ENCODE measurements at regions of chr2 and their contacts with region 1.

Region 1: DNA sequence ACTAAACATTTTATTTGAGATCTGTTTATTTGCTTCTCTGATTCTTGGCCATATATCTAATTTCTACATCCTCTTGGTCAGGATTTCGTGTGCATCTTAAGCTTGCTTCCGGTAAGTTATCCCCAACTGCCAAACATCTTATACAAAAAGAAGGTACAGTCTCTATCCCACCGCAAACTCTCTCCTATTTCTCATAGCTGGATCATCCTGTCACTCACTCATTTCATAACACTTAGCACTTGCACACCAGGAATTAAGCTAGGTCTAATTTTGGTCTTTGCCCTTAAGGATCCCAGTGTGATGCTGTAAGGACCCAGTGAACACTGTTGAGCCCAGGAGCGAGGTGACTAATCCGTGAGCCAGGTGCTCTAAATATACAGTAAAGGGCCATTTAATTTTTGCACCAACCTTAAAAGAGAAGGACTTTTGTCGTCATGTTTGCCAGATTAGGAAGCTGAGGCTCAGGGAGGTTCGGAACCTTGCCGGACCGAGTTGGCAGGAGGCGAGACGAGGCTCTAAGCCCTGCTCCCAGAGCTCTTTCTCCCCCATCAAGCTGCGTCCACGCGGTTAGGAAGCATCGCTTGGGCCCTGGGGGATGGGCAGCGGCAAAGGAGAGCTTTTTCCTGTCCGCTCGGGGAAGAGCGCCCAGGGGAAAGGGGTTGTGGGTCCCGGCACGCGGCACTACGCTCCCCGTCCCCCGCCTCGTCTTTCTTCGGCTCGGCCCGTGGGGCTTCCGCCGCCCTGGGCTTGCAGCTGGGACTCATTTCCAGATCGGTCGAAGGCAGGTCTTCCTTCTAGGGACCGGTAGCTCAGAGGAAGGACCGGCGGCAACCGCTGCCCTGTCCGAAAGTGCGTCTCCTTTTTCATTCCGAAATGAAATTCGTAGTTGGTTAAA is 4.1 kb upstream of the ITPRIPL1 start:
- DNase-seq: peak; percentile 26
- H3K4me3 Mint-ChIP-seq: peak overlapping the region; percentile 88
- H3K27ac Mint-ChIP-seq: peak overlapping the region; percentile 85
- H3K4me1 Mint-ChIP-seq: peaks cover 63% of the 10 kb centered on the region
- H3K27me3 Mint-ChIP-seq: no peaks in the 10 kb centered on the region

Region 2: DNA sequence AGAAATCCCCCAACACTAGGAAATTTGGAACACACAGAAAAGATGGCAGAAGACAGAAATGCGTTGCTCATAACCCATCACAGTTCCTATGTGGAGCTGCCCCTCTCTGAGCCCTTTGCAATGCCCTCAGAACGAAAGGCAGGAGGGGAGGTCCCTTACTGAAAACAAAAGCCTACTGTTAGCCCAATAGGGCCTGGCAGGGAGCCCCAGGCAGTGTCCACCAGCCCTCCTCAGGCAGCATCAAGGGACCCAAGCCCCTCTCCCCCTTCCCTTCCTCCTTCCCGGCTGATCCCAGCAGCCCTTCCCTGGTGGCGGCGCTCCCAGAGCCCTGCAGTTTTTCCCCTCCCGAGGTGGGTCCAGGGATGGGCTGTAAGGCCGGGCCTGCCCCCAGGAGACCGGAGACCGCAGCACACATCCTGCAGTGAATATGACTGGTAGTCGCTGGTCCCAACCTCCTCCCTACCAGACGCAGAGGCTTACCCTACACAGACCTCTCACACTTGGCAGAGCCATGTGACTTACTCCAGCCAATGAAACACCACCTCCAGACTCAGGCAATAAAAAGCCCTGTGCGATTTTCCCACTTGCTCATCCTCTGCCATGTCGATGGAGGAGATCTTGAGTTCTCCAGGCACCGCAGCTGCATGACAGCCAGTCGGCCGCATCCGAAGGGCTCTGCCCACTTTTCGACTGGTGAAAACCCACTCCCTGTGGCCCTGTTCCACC is 156.4 kb before region 1 on chr2:
- intact Hi-C with region 1: loop called (anchors 5 kb)
- DNase-seq: peak; percentile 49
- H3K4me3 Mint-ChIP-seq: peak overlapping the region; percentile 81
- H3K27ac Mint-ChIP-seq: peak overlapping the region; percentile 99
- H3K4me1 Mint-ChIP-seq: peaks cover 60% of the 10 kb centered on the region
- H3K27me3 Mint-ChIP-seq: no peaks in the 10 kb centered on the region

Region 3: GRCh38 chr2:96208143-96209010 is 112.6 kb before region 1 on chr2 and contains the start of gene STARD7:
- intact Hi-C with region 1: loop called (anchors 5 kb)
- DNase-seq: peak; percentile 98
- H3K4me3 Mint-ChIP-seq: peak within 1 kb of the TSS; percentile 96
- H3K27ac Mint-ChIP-seq: peak within 1 kb of the TSS; percentile 94
- H3K4me1 Mint-ChIP-seq: peaks cover 57% of the 10 kb centered on the region
- H3K27me3 Mint-ChIP-seq: no peaks in the 10 kb centered on the region
- total RNA-seq, gene STARD7: 216 and 229 TPM in 2 replicates

Region 4: DNA sequence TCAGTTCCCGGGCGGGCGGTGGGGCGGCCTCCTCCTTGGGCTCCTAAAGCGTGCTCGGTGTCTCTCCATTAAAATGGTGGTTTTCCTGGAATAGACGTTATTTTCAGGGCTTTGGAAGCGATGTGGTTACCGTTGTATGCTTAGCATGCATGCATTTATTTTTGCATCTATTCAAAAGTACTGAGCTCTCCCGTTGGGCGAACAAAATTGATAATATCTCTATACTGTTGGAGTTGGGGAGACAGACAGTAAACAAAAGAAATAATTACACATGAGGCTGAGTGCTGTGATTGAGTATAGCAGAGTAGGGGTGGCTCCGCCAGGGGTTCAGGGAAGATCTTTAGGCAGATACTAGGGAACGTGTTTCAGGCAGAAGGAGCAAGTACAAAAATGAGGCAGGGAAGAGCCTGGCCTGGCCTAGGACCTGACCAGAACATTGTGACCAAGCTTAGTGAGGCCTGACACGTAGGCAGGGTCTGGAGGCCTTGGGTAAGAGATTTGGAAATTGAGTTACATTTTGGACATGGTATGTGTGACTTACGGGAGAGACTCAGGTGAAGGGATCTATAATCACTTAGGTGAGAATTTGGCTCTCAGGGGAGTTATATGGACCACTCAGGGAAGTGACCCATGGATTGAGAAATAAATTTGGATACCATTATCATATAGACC is 15.3 kb after region 1 on chr2:
- intact Hi-C with region 1: loop called (anchors 1 kb)
- DNase-seq: no peak
- H3K4me3 Mint-ChIP-seq: peak overlapping the region; percentile 95
- H3K27ac Mint-ChIP-seq: peak overlapping the region; percentile 93
- H3K4me1 Mint-ChIP-seq: peaks cover 67% of the 10 kb centered on the region
- H3K27me3 Mint-ChIP-seq: no peaks in the 10 kb centered on the region

Region 5: GRCh38 chr2:96485751-96486651 is 165.0 kb after region 1 on chr2:
- intact Hi-C with region 1: loop called (anchors 5 kb)
- DNase-seq: peak; percentile 88
- H3K4me3 Mint-ChIP-seq: peak overlapping the region; percentile 92
- H3K27ac Mint-ChIP-seq: peak overlapping the region; percentile 96
- H3K4me1 Mint-ChIP-seq: peaks cover 63% of the 10 kb centered on the region
- H3K27me3 Mint-ChIP-seq: peaks cover 5% of the 10 kb centered on the region

Region 6: DNA sequence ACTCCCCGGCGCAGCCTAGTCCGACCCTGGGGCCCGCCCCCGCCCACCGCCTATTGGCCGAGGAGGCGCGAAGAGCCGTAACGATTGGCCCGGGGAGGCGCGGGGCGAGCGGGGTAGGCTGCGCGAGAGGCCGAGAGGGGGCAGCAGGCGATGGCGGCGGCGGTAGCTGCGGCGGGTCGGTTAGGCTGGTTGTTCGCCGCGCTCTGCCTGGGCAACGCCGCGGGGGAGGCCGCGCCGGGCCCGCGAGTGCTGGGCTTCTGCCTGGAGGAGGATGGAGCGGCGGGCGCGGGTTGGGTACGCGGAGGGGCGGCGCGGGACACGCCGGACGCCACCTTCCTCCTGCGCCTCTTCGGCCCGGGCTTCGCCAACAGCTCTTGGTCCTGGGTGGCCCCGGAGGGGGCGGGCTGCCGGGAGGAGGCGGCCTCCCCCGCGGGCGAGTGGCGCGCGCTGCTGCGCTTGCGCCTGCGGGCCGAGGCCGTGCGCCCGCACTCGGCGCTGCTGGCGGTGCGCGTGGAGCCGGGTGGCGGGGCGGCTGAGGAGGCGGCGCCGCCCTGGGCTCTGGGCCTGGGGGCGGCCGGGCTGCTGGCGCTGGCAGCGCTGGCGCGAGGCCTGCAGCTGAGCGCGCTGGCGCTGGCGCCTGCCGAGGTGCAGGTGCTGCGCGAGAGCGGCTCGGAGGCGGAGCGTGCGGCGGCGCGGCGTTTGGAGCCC is 495.3 kb after region 1 on chr2 and contains the start of gene CNNM3:
- intact Hi-C with region 1: loop called (anchors 5 kb)
- DNase-seq: peak; percentile 97
- H3K4me3 Mint-ChIP-seq: peak within 1 kb of the TSS; percentile 93
- H3K27ac Mint-ChIP-seq: peak within 1 kb of the TSS; percentile 91
- H3K4me1 Mint-ChIP-seq: peaks cover 54% of the 10 kb centered on the region
- H3K27me3 Mint-ChIP-seq: no peaks in the 10 kb centered on the region
- total RNA-seq, gene CNNM3: 26.1 and 31.4 TPM in 2 replicates